T-cell (primary cell): ENCODE measurements at regions of chr2 and their contacts with region 1.

Region 1: GRCh38 chr2:167462379-167462778 is 574.1 kb downstream of the XIRP2 start:
- DNase-seq: no peak
- ATAC-seq: no peak
- H3K4me3 ChIP-seq: no peak overlapping the region
- H3K4me3 Mint-ChIP-seq: no peak overlapping the region
- H3K27ac ChIP-seq: no peak overlapping the region
- H3K27ac Mint-ChIP-seq: no peak overlapping the region
- H3K4me1 ChIP-seq: no peaks in the 10 kb centered on the region
- H3K4me1 Mint-ChIP-seq: no peaks in the 10 kb centered on the region
- H3K27me3 ChIP-seq: no peaks in the 10 kb centered on the region
- H3K27me3 Mint-ChIP-seq: no peaks in the 10 kb centered on the region

Region 2: DNA sequence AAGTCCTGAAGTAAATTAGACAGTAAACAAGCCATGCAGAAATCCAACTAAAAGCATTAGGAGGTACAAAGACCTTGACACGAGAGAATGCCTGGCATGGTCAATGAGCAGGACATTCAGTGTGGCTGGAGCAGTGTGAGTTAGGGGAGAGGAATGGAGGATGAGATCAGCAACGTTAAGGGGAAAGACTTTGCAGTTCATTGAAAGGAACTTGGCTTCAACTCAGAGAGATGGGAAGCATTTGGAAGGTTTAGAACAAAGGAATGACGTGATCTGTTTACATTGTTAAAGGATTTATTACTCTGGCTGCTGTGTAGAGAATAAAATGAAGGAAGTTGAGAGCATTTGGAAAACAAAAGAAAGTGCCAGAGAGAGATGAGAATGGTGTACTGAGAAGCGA is 47.2 kb after region 1 on chr2:
- CTCF ChIA-PET with region 1: interaction called in 1 of 2 experiments, 13 read pairs
- POLR2A ChIA-PET with region 1: no interaction called
- DNase-seq: no peak
- ATAC-seq: no peak
- H3K4me3 ChIP-seq: no peak overlapping the region
- H3K4me3 Mint-ChIP-seq: no peak overlapping the region
- H3K27ac ChIP-seq: no peak overlapping the region
- H3K27ac Mint-ChIP-seq: no peak overlapping the region
- H3K4me1 ChIP-seq: no peaks in the 10 kb centered on the region
- H3K4me1 Mint-ChIP-seq: no peaks in the 10 kb centered on the region
- H3K27me3 ChIP-seq: no peaks in the 10 kb centered on the region
- H3K27me3 Mint-ChIP-seq: no peaks in the 10 kb centered on the region